ENCODE measurements at regions of chr10 and their contacts with region 1.

Region 1: DNA sequence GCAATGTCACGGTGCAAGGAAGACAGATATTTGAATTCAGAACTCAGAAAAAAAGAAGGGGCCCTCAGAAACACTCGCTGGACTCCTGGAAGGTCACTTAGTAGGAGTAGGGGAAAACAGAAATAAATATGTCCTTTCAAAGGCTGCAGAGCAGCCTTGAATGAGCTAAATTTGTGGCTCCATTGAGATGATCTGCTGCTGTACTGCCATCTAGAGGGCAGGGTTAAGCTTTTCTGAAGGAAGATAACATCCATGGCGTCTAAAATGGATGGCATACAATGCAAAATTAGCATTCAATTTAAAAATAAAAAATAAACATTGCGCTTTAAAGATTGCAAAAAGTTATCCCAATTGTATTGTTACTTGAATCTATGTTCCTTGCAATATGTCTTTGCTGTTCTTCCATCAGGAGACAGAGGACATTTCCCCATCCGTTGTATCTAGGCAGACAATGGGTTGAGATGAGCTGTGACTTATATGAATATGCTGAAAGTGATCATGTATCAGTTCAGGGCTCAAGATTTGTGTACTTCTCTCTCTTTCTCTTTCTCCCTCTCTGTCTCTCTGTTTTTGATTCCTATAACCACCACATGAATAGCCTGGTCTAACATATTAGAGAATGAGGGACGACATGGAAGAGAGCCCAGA is 642.2 kb downstream of the SH2D4B start:
- DNase-seq: peak; percentile 54
- H3K4me3 Mint-ChIP-seq: no peak overlapping the region
- H3K27ac Mint-ChIP-seq: no peak overlapping the region
- H3K4me1 Mint-ChIP-seq: peaks cover 10% of the 10 kb centered on the region
- H3K27me3 Mint-ChIP-seq: no peaks in the 10 kb centered on the region
- CTCF ChIP-seq: peak; percentile 29

Region 2: GRCh38 chr10:80699602-80700039 is 480.3 kb before region 1 on chr10:
- CTCF ChIA-PET with region 1: interaction called, 11 read pairs
- intact Hi-C with region 1: loop called (anchors 1 kb)
- DNase-seq: peak; percentile 90
- H3K4me3 Mint-ChIP-seq: no peak overlapping the region
- H3K27ac Mint-ChIP-seq: no peak overlapping the region
- H3K4me1 Mint-ChIP-seq: no peaks in the 10 kb centered on the region
- H3K27me3 Mint-ChIP-seq: peaks cover 80% of the 10 kb centered on the region
- CTCF ChIP-seq: peak; percentile 93

Region 3: DNA sequence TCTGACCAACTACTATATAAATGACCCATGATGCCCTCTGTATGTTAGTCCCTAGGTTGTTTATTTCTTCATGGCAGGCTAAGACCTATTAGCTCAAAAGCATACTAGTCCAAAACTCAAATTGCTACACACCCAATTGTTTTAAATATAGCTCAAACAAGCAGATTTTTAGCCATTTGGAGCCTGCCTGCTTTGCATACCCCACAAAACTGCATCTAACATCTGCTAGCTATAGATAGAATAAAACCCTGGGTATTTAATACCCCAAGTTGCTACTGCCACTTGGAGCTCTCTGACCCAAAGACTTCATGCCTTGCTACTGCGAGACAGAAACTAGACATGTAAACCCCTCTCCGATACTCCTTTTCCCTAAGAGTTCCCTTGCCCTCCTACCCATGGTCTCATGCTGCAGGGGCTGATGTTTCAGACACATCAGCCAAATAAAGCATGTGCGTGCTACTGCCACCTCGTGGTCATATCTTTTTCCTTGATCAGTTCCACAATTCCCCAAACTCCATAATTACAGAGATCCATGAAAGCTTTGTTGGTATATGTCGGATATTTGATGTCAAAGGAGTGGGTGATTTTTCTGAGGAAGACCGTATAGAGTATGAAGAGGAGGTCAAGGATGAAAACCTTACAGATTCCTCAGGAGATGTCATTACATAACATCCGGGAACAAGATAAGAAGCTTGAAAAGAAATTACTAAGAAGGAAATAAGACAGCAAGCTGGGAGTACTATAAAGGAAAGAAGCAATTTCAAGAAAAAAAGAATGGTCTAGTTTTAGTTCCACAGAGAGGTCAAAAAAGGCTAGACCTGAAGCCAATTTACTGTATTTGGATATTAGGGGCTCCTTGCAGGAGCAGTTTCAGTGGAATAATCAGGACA is 255.6 kb before region 1 on chr10:
- CTCF ChIA-PET with region 1: interaction called, 8 read pairs
- intact Hi-C with region 1: loop called (anchors 10 kb)
- DNase-seq: peak; percentile 71
- H3K4me3 Mint-ChIP-seq: no peak overlapping the region
- H3K27ac Mint-ChIP-seq: no peak overlapping the region
- H3K4me1 Mint-ChIP-seq: no peaks in the 10 kb centered on the region
- H3K27me3 Mint-ChIP-seq: peaks cover 22% of the 10 kb centered on the region
- CTCF ChIP-seq: peak; percentile 65

Region 4: GRCh38 chr10:81108516-81109199 is 71.3 kb before region 1 on chr10:
- CTCF ChIA-PET with region 1: interaction called, 10 read pairs
- intact Hi-C with region 1: no loop called
- DNase-seq: peak; percentile 69
- H3K4me3 Mint-ChIP-seq: peak overlapping the region; percentile 27
- H3K27ac Mint-ChIP-seq: peak overlapping the region; percentile 91
- H3K4me1 Mint-ChIP-seq: peaks cover 17% of the 10 kb centered on the region
- H3K27me3 Mint-ChIP-seq: no peaks in the 10 kb centered on the region
- CTCF ChIP-seq: no peak

Region 5: DNA sequence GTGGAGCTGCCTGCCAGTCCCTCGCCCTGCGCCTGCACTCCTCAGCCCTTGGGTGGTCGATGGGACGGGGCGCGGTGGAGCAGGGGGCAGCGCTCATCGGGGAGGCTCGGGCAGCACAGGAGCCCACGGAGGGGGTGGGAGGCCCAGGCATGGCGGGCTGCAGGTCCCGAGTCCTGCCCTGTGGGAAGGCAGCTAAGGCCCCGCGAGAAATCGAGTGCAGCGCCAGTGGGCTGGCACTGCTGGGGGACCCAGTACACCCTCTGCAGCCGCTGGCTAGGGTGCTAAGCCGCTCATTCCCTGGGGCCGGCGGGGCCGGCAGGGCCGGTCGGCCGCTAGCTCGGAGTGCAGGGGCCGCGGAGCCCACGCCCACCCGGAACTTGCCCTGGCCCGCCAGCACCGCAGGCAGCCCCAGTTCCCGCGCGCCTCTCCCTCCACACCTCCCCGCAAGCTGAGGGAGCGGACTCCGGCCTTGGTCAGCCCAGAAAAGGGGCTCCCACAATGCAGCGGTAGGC is 129.2 kb after region 1 on chr10:
- CTCF ChIA-PET with region 1: no interaction called
- intact Hi-C with region 1: no loop called
- DNase-seq: no peak
- H3K4me3 Mint-ChIP-seq: no peak overlapping the region
- H3K27ac Mint-ChIP-seq: no peak overlapping the region
- H3K4me1 Mint-ChIP-seq: no peaks in the 10 kb centered on the region
- H3K27me3 Mint-ChIP-seq: no peaks in the 10 kb centered on the region
- CTCF ChIP-seq: no peak